SK-N-SH (cell line): ENCODE measurements at regions of chr11 and their contacts with region 1.

Region 1: GRCh38 chr11:63838678-63839507 is at the start of gene MARK2:
- DNase-seq: peak; percentile 98
- H3K4me3 ChIP-seq: peak within 1 kb of the TSS; percentile 77 to 83
- H3K27ac ChIP-seq: peak within 1 kb of the TSS; percentile 46 to 78; a peak in 3 of 4 replicates
- H3K4me1 ChIP-seq: peaks cover 12 to 28% of the 10 kb centered on the region in 2 experiments; a peak in 3 of 4 replicates
- H3K27me3 ChIP-seq: no peaks in the 10 kb centered on the region
- CTCF ChIP-seq: no peak
- EP300 ChIP-seq: no peak
- RAD21 ChIP-seq: no peak
- polyA plus RNA-seq, gene MARK2: 14.6 and 18.8 TPM in 2 replicates

Region 2: GRCh38 chr11:63749624-63750023 is 89.3 kb before region 1 on chr11:
- CTCF ChIA-PET with region 1: no interaction called
- POLR2A ChIA-PET with region 1: no interaction called
- DNase-seq: no peak
- H3K4me3 ChIP-seq: no peak overlapping the region
- H3K27ac ChIP-seq: no peak overlapping the region
- H3K4me1 ChIP-seq: no peaks in the 10 kb centered on the region
- H3K27me3 ChIP-seq: no peaks in the 10 kb centered on the region
- CTCF ChIP-seq: no peak
- EP300 ChIP-seq: no peak
- RAD21 ChIP-seq: no peak

Region 3: GRCh38 chr11:63760487-63761079 is 78.3 kb before region 1 on chr11:
- CTCF ChIA-PET with region 1: no interaction called
- POLR2A ChIA-PET with region 1: no interaction called
- DNase-seq: no peak
- H3K4me3 ChIP-seq: no peak overlapping the region
- H3K27ac ChIP-seq: no peak overlapping the region
- H3K4me1 ChIP-seq: no peaks in the 10 kb centered on the region; a peak in 1 of 4 replicates
- H3K27me3 ChIP-seq: no peaks in the 10 kb centered on the region
- CTCF ChIP-seq: no peak
- EP300 ChIP-seq: no peak
- RAD21 ChIP-seq: no peak

Region 4: GRCh38 chr11:63871962-63872799 is 33.3 kb after region 1 on chr11:
- CTCF ChIA-PET with region 1: interaction called, 23 read pairs
- POLR2A ChIA-PET with region 1: interaction called, 3 read pairs
- DNase-seq: peak; percentile 80
- H3K4me3 ChIP-seq: no peak overlapping the region
- H3K27ac ChIP-seq: peak overlapping the region; percentile 25 to 65; a peak in 3 of 4 replicates
- H3K4me1 ChIP-seq: peaks cover 16 to 34% of the 10 kb centered on the region in 2 experiments; a peak in 3 of 4 replicates
- H3K27me3 ChIP-seq: no peaks in the 10 kb centered on the region
- CTCF ChIP-seq: peak; percentile 53
- EP300 ChIP-seq: no peak
- RAD21 ChIP-seq: peak; percentile 71

Region 5: DNA sequence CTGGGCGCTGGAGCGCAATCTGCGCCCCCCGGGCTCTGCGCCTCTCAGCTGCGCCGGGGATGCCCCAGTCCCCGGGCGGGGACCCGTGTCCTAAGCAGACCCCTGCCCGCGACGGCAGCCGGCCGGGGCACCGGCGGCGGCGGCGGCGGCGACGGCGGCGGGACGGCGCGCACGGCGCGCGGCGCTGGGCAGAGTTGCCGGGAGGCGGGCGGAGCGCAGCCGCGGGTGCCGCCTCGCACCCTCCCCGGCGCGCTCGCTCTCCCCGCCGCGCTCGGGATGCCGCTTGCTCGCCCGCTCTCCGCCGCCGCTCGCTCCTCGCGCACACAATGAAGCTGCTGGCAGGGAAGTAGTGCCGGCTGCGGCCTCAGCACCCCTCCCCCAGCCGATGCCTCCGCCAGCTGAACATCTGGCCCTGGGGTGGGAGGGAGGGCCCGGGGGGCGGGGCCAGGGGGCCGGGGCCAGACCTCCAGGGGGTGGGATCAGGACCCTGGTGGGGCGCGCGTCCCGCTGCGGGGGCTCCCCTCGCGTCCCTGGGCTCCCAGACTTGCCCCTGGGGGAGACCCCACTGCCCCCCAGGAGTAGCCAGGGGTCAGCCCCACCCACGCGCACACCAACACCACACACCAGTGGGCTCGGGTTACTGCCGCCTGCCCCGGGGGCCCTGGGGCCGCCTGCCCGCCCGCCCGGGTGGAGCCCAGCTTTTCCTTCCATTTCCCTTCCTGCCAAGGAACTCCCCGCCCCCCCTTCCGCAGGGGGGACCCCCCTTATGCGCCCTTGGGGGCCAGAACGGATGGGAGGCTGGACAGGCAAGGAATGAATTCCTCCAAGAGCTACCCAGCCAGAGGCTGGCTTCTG is 78.2 kb after region 1 on chr11 and contains the start of gene RCOR2:
- CTCF ChIA-PET with region 1: interaction called, 42 read pairs
- POLR2A ChIA-PET with region 1: interaction called, 8 read pairs
- DNase-seq: peak; percentile 98
- H3K4me3 ChIP-seq: peak within 1 kb of the TSS; percentile 58 to 64
- H3K27ac ChIP-seq: peak within 1 kb of the TSS in 1 of 2 experiments; percentile 98; a peak in 2 of 4 replicates
- H3K4me1 ChIP-seq: peaks cover 4 to 44% of the 10 kb centered on the region in 2 experiments; a peak in 3 of 4 replicates
- H3K27me3 ChIP-seq: no peaks in the 10 kb centered on the region
- CTCF ChIP-seq: no peak
- EP300 ChIP-seq: no peak
- RAD21 ChIP-seq: no peak
- polyA plus RNA-seq, gene RCOR2: 1.1 and 1.4 TPM in 2 replicates

Region 6: DNA sequence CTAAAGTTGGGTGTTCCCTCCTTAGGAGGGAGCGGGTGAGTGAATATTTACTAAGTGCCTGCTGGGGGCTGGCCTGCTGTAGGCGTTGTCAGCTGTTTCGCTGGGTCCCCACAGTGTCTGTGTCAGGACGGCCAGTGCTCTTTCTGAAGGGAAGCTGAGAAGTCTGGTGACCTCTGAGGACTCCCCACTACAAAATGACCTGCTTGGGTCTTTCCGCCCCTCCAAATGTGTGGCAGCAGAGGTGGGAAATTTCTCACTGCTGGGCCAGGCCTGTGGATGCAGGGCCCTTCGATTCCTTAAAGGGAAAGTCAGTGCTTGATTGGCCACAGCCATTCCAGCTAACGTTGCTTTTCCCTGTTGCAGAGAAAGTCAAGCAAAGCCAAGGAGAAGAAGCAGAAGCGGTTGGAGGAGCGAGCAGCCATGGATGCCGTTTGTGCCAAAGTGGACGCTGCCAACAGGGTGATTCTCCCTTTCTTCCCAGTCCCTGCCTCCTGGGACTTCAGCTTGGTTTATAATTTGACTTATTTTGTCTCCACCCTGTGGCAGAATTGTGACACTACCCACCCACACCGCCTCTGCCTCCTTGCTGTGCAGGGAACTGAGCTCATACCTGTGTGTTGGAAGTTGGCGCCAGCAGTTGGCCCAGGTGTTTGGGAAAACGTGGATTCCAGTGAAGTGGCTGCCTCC is 106.7 kb after region 1 on chr11:
- CTCF ChIA-PET with region 1: interaction called, 162 read pairs
- POLR2A ChIA-PET with region 1: interaction called, 5 read pairs
- DNase-seq: peak; percentile 84
- H3K4me3 ChIP-seq: no peak overlapping the region; a peak in 1 of 4 replicates
- H3K27ac ChIP-seq: peak overlapping the region in 1 of 2 experiments; percentile 29; a peak in 2 of 4 replicates
- H3K4me1 ChIP-seq: peaks cover 9 to 22% of the 10 kb centered on the region in 2 experiments; a peak in 3 of 4 replicates
- H3K27me3 ChIP-seq: no peaks in the 10 kb centered on the region
- CTCF ChIP-seq: peak; percentile 71
- EP300 ChIP-seq: no peak
- RAD21 ChIP-seq: peak; percentile 89

Region 7: DNA sequence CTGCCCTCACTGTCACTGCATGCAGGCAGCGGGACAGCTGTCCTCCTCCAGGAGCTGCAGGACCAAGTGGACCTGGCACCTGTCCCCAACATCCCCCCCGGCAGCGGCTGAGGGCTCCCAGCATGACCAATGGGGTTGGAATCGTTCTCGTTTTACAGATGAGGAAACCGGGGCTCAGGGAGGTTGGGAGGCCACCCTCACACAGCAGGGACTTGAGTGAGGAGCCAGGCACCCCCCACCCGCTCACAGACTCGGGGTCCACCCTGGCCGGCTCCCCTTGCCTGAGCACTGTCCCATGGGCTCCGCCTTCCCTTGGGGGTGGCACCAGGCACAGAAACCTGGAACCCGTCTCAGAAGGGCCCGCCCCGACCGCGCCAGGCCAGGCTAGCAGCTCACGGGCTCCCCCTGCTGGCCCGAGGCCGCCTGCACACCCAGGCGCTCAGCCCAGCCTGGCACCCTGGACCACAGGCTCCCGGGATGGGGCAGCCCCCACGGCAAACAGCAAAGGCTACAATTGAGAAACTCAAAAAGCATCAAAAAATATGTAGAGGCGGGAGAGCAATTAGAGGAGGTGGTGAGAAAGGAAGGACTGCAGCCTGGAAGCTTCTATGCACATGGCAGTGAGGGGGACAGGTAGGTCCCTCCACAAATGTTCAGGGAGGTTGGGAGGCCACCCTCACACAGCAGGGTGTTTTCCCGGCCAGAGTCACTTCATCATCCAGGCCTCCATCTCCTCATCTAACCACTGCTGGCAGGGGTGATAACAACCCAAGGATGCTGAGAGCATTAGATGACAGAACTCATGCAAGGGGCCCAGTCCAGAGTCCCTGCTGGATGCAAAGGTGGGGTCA is 314.2 kb after region 1 on chr11:
- CTCF ChIA-PET with region 1: interaction called, 34 read pairs
- POLR2A ChIA-PET with region 1: no interaction called
- DNase-seq: peak; percentile 95
- H3K4me3 ChIP-seq: peak overlapping the region in 1 of 2 experiments; percentile 42; a peak in 1 of 4 replicates
- H3K27ac ChIP-seq: peak overlapping the region in 1 of 2 experiments; percentile 55; a peak in 1 of 4 replicates
- H3K4me1 ChIP-seq: peaks cover 0 to 55% of the 10 kb centered on the region in 2 experiments; a peak in 2 of 4 replicates
- H3K27me3 ChIP-seq: no peaks in the 10 kb centered on the region
- CTCF ChIP-seq: peak; percentile 99
- EP300 ChIP-seq: no peak
- RAD21 ChIP-seq: peak; percentile 84